ENCODE measurements at regions of chr11 and their contacts with region 1.

Region 1: DNA sequence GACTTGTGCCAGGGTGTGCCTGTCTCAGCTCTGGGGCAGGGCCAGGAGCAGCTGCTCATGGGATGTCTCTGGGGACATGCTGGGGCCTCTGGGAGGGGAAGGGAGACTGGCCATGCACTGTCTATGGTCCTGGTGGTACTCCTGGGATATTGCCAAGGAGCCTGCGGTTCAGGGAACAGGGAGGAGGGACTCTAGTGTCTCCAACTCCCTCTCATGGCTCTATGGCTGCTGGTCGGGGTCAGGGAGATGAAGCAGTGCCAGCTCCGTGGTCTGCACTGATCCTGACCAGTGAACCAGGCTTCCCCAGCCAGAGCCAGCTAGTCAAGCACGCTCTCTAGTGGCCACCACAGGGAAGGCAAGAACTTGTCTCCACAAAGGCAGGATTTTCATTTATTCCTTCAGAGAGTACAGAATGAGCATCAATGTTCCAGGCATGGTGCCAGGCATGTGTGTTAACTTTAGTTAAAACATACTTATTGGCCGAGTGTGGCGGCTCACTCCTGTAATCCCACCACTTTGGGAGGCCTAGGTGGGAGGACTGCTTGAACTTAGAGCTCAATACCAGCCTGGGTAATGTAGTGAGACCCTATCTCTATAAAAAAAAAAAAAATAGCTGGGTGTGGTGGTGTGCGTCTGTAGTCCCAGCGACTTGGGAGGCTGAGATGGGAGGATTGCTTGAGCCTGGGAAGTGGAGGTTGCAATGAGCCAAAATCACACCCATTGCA is 2.5 kb upstream of the BEST1 start:
- DNase-seq: no peak
- H3K4me3 ChIP-seq: no peak overlapping the region
- H3K27me3 ChIP-seq: peaks cover 2% of the 10 kb centered on the region
- CTCF ChIP-seq: peak; percentile 98

Region 2: GRCh38 chr11:61792310-61793085 is 155.2 kb before region 1 on chr11 and contains the starts of genes FEN1 and TMEM258:
- CTCF ChIA-PET with region 1: interaction called, 29 read pairs
- POLR2A ChIA-PET with region 1: no interaction called
- DNase-seq: peak; percentile 71
- H3K4me3 ChIP-seq: peak within 1 kb of the TSS; percentile 81
- H3K27me3 ChIP-seq: no peaks in the 10 kb centered on the region
- CTCF ChIP-seq: no peak
- polyA plus RNA-seq, gene FEN1: 11.7 and 13.2 TPM in 2 replicates
- polyA plus RNA-seq, gene TMEM258: 371 and 399 TPM in 2 replicates

Region 3: GRCh38 chr11:61881397-61881796 is 66.3 kb before region 1 on chr11:
- CTCF ChIA-PET with region 1: interaction called, 22 read pairs
- POLR2A ChIA-PET with region 1: no interaction called
- DNase-seq: no peak
- H3K4me3 ChIP-seq: no peak overlapping the region
- H3K27me3 ChIP-seq: no peaks in the 10 kb centered on the region
- CTCF ChIP-seq: no peak

Region 4: GRCh38 chr11:61923166-61924063 is 24.2 kb before region 1 on chr11:
- CTCF ChIA-PET with region 1: interaction called, 31 read pairs
- POLR2A ChIA-PET with region 1: interaction called, 3 read pairs
- DNase-seq: peak; percentile 69
- H3K4me3 ChIP-seq: no peak overlapping the region
- H3K27me3 ChIP-seq: no peaks in the 10 kb centered on the region
- CTCF ChIP-seq: no peak

Region 5: GRCh38 chr11:61967116-61967923 is 19.7 kb after region 1 on chr11 and contains the start of gene FTH1:
- CTCF ChIA-PET with region 1: interaction called, 18 read pairs
- POLR2A ChIA-PET with region 1: interaction called, 3 read pairs
- DNase-seq: peak; percentile 51
- H3K4me3 ChIP-seq: peak within 1 kb of the TSS; percentile 83
- H3K27me3 ChIP-seq: no peaks in the 10 kb centered on the region
- CTCF ChIP-seq: no peak
- polyA plus RNA-seq, gene FTH1: 1,472 and 1,806 TPM in 2 replicates